Activated CD4-positive, alpha-beta memory T cell treated with anti-CD3 and anti-CD28 coated beads for 36 hours (primary cell): ENCODE measurements at regions of chr5 and their contacts with region 1.

Region 1: DNA sequence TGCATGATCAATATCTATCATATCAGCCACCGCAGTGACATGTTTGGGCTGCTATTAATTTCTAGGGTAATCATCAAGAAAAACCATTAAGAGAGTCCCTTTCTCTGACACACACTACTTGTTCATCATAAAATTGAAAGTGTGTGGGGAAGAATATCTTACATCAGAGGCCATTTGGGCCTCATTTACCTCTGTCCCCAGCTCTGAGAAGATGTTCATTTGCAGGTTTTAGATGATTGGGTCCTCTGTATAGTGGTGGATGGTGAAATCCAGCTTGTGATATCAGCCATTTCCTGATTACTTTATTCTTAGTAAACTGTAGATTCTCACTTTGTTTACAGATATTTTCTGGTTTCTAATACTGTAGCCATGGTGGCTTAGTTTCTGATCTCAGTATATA is 29.8 kb upstream of the PJA2 start:
- DNase-seq: no peak
- H3K4me3 Mint-ChIP-seq: no peak overlapping the region
- H3K27ac Mint-ChIP-seq: no peak overlapping the region
- H3K4me1 Mint-ChIP-seq: no peaks in the 10 kb centered on the region
- H3K27me3 Mint-ChIP-seq: no peaks in the 10 kb centered on the region

Region 2: GRCh38 chr5:108642167-108642906 is 797.3 kb before region 1 on chr5:
- CTCF ChIA-PET with region 1: no interaction called
- POLR2A ChIA-PET with region 1: no interaction called
- intact Hi-C with region 1: loop called (anchors 1 kb)
- DNase-seq: peak; percentile 67
- H3K4me3 Mint-ChIP-seq: no peak overlapping the region
- H3K27ac Mint-ChIP-seq: no peak overlapping the region
- H3K4me1 Mint-ChIP-seq: peaks cover 2% of the 10 kb centered on the region
- H3K27me3 Mint-ChIP-seq: peaks cover 3% of the 10 kb centered on the region

Region 3: DNA sequence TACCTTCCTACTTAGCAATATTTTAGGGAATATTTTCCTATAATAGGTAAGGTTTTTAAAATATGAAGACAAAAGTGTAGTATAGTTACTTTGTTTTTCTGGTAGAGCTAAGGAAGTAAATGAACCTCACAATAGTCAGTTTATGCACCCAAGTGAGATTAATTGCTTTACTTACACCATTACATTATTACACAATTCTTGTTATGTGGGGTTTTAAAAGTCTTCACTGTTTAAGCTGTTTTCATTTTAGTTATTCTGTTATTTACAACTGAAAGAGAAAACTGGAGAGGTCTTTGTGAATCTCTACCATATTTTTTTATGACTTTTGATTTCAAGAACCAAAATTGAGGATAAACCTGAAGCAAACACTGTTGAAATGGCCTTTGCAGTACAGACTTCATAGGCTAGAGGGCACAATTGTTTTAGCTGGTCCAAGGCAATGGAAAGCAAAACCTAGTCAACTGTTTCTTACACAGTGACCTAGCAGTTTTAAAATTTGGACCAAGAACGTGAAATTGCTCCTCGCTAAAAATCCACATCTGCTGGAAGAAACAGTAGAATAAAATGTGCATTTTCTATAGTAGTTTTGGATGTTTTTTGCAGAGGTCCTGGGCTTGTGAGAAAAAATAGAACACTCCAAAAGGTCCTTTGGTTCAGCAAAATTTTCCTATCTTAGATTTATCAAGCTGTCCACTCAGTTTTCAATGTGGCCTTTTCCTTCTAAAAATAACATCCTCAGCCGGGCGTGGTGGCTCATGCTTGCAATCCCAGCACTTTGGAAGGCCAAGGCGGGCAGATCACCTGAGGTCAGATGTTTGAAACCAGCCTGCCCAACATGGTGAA is 758.3 kb before region 1 on chr5:
- CTCF ChIA-PET with region 1: no interaction called
- POLR2A ChIA-PET with region 1: no interaction called
- intact Hi-C with region 1: loop called (anchors 2 kb)
- DNase-seq: no peak
- H3K4me3 Mint-ChIP-seq: no peak overlapping the region
- H3K27ac Mint-ChIP-seq: no peak overlapping the region
- H3K4me1 Mint-ChIP-seq: no peaks in the 10 kb centered on the region
- H3K27me3 Mint-ChIP-seq: peaks cover 3% of the 10 kb centered on the region

Region 4: GRCh38 chr5:109347252-109347888 is 92.2 kb before region 1 on chr5:
- CTCF ChIA-PET with region 1: no interaction called
- POLR2A ChIA-PET with region 1: no interaction called
- intact Hi-C with region 1: no loop called
- DNase-seq: no peak
- H3K4me3 Mint-ChIP-seq: no peak overlapping the region
- H3K27ac Mint-ChIP-seq: no peak overlapping the region
- H3K4me1 Mint-ChIP-seq: peaks cover 15% of the 10 kb centered on the region
- H3K27me3 Mint-ChIP-seq: no peaks in the 10 kb centered on the region

Region 5: GRCh38 chr5:109416882-109417281 is 22.7 kb before region 1 on chr5:
- CTCF ChIA-PET with region 1: no interaction called
- POLR2A ChIA-PET with region 1: no interaction called
- intact Hi-C with region 1: no loop called
- DNase-seq: no peak
- H3K4me3 Mint-ChIP-seq: no peak overlapping the region
- H3K27ac Mint-ChIP-seq: no peak overlapping the region
- H3K4me1 Mint-ChIP-seq: peaks cover 4% of the 10 kb centered on the region
- H3K27me3 Mint-ChIP-seq: no peaks in the 10 kb centered on the region

Region 6: GRCh38 chr5:109455598-109456096 is 16.1 kb after region 1 on chr5:
- CTCF ChIA-PET with region 1: no interaction called
- POLR2A ChIA-PET with region 1: no interaction called
- intact Hi-C with region 1: no loop called
- DNase-seq: peak; percentile 51
- H3K4me3 Mint-ChIP-seq: no peak overlapping the region
- H3K27ac Mint-ChIP-seq: peak overlapping the region; percentile 74
- H3K4me1 Mint-ChIP-seq: peaks cover 8% of the 10 kb centered on the region
- H3K27me3 Mint-ChIP-seq: peaks cover 7% of the 10 kb centered on the region